Calu3 (cell line): ENCODE measurements at regions of chr14 and their contacts with region 1.

Region 1: DNA sequence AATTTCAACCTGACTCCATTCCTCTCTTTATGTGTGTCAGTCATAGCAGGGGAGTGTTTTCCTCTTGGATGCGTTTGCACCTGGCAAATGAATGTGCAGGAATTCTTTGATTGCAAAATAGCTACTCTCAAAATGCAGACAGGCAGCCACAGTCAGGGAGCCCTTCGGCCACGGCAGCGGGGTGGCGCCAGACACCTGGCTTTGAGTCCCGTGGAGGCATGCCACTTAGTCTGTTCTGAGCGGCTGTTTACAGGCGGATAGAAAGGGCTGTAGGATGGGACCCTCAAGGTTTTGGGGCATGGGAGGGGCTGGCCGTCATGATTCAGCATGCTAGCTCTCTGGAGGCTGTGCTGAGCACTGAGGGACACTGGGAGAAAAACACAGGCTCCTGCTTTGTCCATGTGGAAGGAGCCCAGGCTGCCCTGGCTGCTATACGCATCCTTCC is 117.1 kb downstream of the SLC25A47 start:
- DNase-seq: peak; percentile 82
- H3K4me3 Mint-ChIP-seq: no peak overlapping the region
- H3K27ac Mint-ChIP-seq: no peak overlapping the region
- H3K4me1 Mint-ChIP-seq: peaks cover 41% of the 10 kb centered on the region
- H3K27me3 Mint-ChIP-seq: no peaks in the 10 kb centered on the region
- CTCF ChIP-seq: peak; percentile 60

Region 2: GRCh38 chr14:100476012-100476822 is 36.0 kb after region 1 on chr14:
- CTCF ChIA-PET with region 1: interaction called, 12 read pairs
- intact Hi-C with region 1: loop called (anchors 5 kb)
- DNase-seq: peak; percentile 71
- H3K4me3 Mint-ChIP-seq: peak overlapping the region; percentile 39
- H3K27ac Mint-ChIP-seq: peak overlapping the region; percentile 86
- H3K4me1 Mint-ChIP-seq: peaks cover 42% of the 10 kb centered on the region
- H3K27me3 Mint-ChIP-seq: no peaks in the 10 kb centered on the region
- CTCF ChIP-seq: no peak

Region 3: GRCh38 chr14:100645192-100645990 is 205.2 kb after region 1 on chr14:
- CTCF ChIA-PET with region 1: interaction called, 64 read pairs
- intact Hi-C with region 1: loop called (anchors 1 kb)
- DNase-seq: peak; percentile 91
- H3K4me3 Mint-ChIP-seq: no peak overlapping the region
- H3K27ac Mint-ChIP-seq: no peak overlapping the region
- H3K4me1 Mint-ChIP-seq: peaks cover 26% of the 10 kb centered on the region
- H3K27me3 Mint-ChIP-seq: peaks cover 33% of the 10 kb centered on the region
- CTCF ChIP-seq: peak; percentile 78